Left ventricle myocardium superior (tissue), 1 donor: ENCODE measurements at regions of chr18 and their contacts with region 1.

Region 1: DNA sequence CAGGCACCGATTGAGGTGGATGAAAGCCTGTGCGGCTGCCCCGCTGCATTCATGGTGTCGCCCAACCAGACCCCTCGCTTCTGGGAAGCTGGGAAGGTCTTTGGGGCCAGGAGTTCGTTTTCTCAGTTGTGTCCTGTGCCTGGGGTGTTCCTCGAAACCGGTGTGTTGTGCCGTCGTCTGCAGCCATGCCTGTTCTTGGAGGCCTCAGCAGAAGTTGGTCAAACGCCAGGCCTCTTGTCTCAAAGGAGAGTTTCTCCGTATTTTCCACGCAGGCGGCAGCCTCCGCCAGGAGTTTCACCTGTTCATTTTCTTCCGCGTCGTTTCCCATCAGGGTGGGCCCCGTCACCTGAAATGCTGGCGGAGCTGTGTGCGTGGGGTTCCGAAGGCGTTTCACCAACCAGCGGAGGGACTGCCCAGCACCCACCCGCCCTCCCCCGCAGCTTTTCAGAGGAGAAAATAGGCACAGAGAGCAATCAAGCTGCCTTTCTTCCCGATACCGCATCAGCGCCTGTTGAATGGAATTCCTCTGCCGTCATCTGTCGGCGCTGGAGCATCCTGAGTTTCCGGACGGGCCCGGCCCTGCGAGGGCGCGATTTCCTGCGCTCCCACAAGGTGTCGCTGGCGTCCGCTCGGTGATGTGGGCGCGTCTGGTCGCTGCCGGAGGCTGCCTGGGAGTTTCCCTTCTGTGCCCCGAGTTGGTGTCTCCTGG is 17.0 kb upstream of the NFATC1 start:
- DNase-seq: peak; percentile 87
- ATAC-seq: peak; percentile 85

Region 2: GRCh38 chr18:79528846-79529245 is 150.2 kb after region 1 on chr18:
- intact Hi-C with region 1: loop called (anchors 5 kb)
- DNase-seq: no peak
- ATAC-seq: peak; percentile 46

Region 3: DNA sequence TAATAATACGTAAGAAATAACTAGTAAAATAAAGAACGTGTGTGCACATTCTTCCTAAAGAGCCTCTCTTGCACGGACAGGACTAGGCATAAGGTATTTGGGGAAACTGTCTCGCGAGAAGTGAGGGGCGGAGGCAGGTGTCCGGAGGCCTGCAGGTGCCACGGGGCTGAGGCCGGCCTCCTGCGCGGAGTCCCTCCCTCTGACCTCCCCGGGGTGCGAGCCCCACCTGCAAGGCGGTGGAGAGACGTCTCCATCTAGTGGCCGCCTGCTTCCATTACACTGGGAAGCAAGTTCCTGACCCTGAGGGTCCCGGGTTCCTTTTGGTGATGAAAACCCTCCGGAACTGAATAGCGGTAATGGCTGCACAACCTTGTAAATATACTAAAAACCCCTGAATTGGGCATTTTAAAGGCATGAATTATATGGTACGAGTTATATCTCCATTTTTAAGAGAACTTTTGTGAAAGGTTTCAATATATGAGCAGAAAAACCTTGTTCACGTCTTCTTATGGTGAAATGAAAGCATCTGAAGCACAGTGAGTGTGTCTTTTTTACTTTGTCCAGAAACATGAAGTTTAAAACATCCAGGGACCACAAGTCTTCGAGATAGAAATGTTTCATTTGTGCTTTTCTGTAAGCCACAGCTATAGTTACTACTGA is 265.4 kb after region 1 on chr18:
- intact Hi-C with region 1: loop called (anchors 5 kb)
- DNase-seq: peak; percentile 73
- ATAC-seq: peak; percentile 92